ENCODE measurements at regions of chr14 and their contacts with region 1.

Region 1: GRCh38 chr14:37253905-37254304 is 56.2 kb downstream of the MIPOL1 start:
- DNase-seq: no peak
- ATAC-seq: no peak
- H3K4me3 ChIP-seq: no peak overlapping the region
- H3K27ac ChIP-seq: no peak overlapping the region
- H3K4me1 ChIP-seq: no peaks in the 10 kb centered on the region
- H3K27me3 ChIP-seq: no peaks in the 10 kb centered on the region
- CTCF ChIP-seq: no peak

Region 2: GRCh38 chr14:37157987-37158386 is 95.9 kb before region 1 on chr14:
- intact Hi-C with region 1: no loop called
- DNase-seq: no peak
- ATAC-seq: no peak
- H3K4me3 ChIP-seq: no peak overlapping the region
- H3K27ac ChIP-seq: no peak overlapping the region
- H3K4me1 ChIP-seq: no peaks in the 10 kb centered on the region
- H3K27me3 ChIP-seq: no peaks in the 10 kb centered on the region
- CTCF ChIP-seq: no peak

Region 3: GRCh38 chr14:37172024-37172869 is 81.7 kb before region 1 on chr14 and contains the start of gene SLC25A21:
- intact Hi-C with region 1: no loop called
- DNase-seq: peak; percentile 64 to 87 (median 85)
- ATAC-seq: peak; percentile 97
- H3K4me3 ChIP-seq: peak within 1 kb of the TSS; percentile 46 to 51
- H3K27ac ChIP-seq: peak within 1 kb of the TSS; percentile 83 to 92
- H3K4me1 ChIP-seq: peaks cover 0 to 6% of the 10 kb centered on the region in 2 donors
- H3K27me3 ChIP-seq: peaks cover 0 to 27% of the 10 kb centered on the region in 2 donors
- CTCF ChIP-seq: no peak
- polyA plus RNA-seq, gene SLC25A21: 1.4 to 3.7 (median 2.8) TPM

Region 4: DNA sequence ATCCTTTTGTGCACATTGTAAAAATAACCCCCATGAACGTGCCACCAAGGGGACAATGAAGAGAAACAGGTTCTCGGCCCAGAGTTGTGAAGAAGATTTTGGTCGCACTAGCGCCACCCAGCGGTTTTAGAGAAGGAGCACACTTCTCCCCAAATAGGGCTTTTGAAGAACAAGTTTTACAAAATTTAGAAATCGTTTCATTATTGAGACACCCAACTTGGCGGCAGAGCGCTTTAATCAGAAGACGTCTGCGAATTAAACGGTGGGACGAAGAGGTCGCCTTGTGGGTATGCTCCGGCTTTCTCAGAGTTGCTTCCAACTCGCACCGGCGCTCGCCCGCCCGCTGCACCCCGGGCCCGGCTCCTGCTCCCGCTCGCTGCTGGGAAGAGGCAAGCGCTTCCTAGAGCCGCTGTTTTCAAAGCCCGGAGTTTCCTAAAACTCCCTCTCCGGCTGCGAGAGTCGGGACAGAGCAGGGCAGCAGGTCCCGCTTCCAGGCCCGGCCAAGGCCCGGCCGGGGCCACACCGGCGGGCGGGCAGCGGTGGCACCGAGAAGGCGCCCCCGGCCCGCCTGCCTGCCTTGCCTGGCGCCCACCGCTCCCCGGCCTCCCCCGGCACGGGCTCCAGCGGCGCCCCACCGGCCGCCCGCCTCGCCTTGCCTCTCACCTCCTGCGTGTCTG is 340.5 kb after region 1 on chr14:
- intact Hi-C with region 1: loop called in 1 of 2 experiments (anchors 5 kb)
- DNase-seq: peak in 2 of 4 donors; percentile 71 to 89
- ATAC-seq: peak; percentile 15
- H3K4me3 ChIP-seq: peak overlapping the region; percentile 38 to 43
- H3K27ac ChIP-seq: peak overlapping the region; percentile 73 to 87
- H3K4me1 ChIP-seq: peaks cover 0 to 28% of the 10 kb centered on the region in 2 donors
- H3K27me3 ChIP-seq: peaks cover 89 to 100% of the 10 kb centered on the region in 2 donors
- CTCF ChIP-seq: peak; percentile 59 to 67

Measured in left lung (tissue), 14 donors.